Vagina (tissue), 2 donors: ENCODE measurements at regions of chr10 and their contacts with region 1.

Region 1: DNA sequence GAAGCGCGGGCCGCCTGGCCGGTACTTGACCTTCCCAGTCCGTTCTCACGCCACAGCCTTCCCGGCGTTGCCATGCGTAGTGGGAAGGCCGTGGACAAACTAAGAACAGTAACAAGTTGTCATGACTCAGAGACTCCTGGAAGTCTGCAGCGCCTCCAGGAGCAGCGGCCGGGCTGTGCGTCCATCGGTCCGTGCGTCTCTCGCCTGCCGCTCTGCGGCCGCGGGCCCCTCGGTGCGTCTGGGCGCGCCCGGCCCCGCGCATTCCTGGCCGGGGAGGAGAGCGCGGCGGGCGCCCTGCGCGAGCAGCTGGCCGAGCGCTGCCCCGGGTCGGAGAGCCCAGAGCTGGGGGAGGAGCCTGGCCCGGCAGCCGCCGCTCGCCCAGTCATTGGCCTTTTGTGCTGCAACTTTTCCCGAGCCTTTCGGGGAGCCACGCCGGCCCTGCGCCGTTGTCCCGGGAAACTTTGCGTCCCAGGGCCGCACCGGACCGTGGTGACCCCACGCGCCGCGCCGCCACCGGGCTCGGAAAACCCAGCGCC is 123.7 kb downstream of the TACC2 start:
- DNase-seq: peak in 1 of 2 donors; percentile 97
- H3K4me3 ChIP-seq: peak overlapping the region; percentile 62 to 71
- H3K27ac ChIP-seq: peak overlapping the region; percentile 96
- H3K4me1 ChIP-seq: peaks cover 42% of the 10 kb centered on the region
- H3K27me3 ChIP-seq: no peaks in the 10 kb centered on the region
- CTCF ChIP-seq: peak in 1 of 3 experiments; percentile 26
- POLR2A ChIP-seq: peak in 1 of 2 donors; percentile 53

Region 2: DNA sequence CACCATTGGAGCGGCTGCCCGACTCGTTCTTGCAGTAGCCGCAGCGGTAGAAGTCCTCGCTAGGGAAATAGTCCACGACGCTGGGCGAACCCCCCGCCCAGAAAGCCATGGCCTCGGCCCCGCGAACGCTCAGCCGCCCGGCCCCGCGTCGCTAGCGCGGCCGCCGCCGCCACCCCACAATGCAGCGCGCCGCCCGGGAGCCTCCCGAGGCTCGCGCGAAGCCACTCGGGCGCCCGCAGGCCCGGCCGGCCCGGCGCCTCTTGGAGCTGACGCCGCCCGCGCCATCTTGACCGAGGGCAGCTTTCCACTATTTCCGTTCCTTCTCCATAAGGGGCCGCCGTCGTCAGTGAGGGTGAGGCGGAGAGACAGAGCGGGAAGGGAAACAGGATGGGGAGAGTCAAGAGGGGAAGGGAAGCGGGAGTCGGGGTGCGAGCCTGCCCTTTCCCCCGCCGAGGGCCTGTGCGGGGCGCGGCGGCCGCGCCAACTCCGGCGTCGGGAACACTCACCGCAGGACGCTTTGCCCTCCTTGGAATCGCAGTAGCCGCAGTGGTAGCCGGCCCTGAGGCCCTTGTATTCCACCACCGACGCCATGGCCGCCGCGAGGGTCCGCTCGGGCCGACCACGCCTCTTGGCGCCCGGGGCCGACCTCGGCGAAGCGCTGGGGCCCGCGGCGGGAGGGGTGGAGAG is 184.7 kb before region 1 on chr10 and contains the start of gene ATE1:
- intact Hi-C with region 1: loop called (anchors 5 kb)
- DNase-seq: peak in 1 of 2 donors; percentile 90
- H3K4me3 ChIP-seq: peak within 1 kb of the TSS; percentile 94 to 96
- H3K27ac ChIP-seq: peak within 1 kb of the TSS; percentile 98
- H3K4me1 ChIP-seq: peaks cover 19% of the 10 kb centered on the region
- H3K27me3 ChIP-seq: no peaks in the 10 kb centered on the region
- CTCF ChIP-seq: no peak
- POLR2A ChIP-seq: peak in 1 of 2 donors; percentile 66
- total RNA-seq, gene ATE1: 21.9 TPM

Region 3: GRCh38 chr10:122051251-122051996 is 61.3 kb before region 1 on chr10:
- intact Hi-C with region 1: loop called (anchors 2 kb)
- DNase-seq: no peak
- H3K4me3 ChIP-seq: no peak overlapping the region
- H3K27ac ChIP-seq: peak overlapping the region; percentile 48
- H3K4me1 ChIP-seq: peaks cover 35% of the 10 kb centered on the region
- H3K27me3 ChIP-seq: no peaks in the 10 kb centered on the region
- CTCF ChIP-seq: peak in 2 of 3 experiments; percentile 31 to 40
- POLR2A ChIP-seq: no peak